ENCODE measurements at regions of chr1 and their contacts with region 1.

Region 1: DNA sequence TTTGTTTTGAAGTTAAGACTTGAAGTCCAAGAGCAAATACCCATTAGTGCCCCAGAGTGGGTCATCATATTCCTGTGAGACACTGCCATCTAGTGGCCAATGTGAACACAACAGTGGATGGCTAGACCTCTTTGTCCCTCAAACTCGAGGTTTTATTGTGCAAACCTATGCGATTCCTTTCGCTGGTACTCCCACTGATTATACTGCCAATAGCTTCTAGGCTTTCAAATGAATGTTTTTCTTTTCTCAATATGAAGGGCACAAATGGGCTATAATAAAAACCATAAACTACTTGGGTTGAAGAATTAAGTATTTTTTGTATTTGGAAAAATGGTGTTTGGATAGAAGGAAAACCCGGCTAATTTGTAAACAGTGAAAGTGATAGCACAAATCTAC is 100.4 kb upstream of the ZNF281 start:
- DNase-seq: peak; percentile 39
- ATAC-seq: peak; percentile 99
- H3K4me3 ChIP-seq: no peak overlapping the region
- H3K27ac ChIP-seq: no peak overlapping the region
- H3K4me1 ChIP-seq: no peaks in the 10 kb centered on the region
- H3K27me3 ChIP-seq: no peaks in the 10 kb centered on the region; a peak in 2 of 4 replicates
- CTCF ChIP-seq: peak; percentile 75 to 95 (median 83)
- EP300 ChIP-seq: no peak
- POLR2A ChIP-seq: no peak
- RAD21 ChIP-seq: peak; percentile 97

Region 2: GRCh38 chr1:199948587-199949280 is 561.5 kb before region 1 on chr1:
- CTCF ChIA-PET with region 1: no interaction called
- POLR2A ChIA-PET with region 1: no interaction called
- RAD21 ChIA-PET with region 1: no interaction called
- SMC1A ChIA-PET with region 1: no interaction called
- in situ Hi-C with region 1: no loop called
- intact Hi-C with region 1: loop called (anchors 10 kb)
- DNase-seq: no peak
- ATAC-seq: no peak
- H3K4me3 ChIP-seq: no peak overlapping the region
- H3K27ac ChIP-seq: no peak overlapping the region
- H3K4me1 ChIP-seq: no peaks in the 10 kb centered on the region
- H3K27me3 ChIP-seq: peaks cover 0 to 5% of the 10 kb centered on the region in 2 experiments; a peak in 2 of 4 replicates
- CTCF ChIP-seq: no peak
- EP300 ChIP-seq: no peak
- POLR2A ChIP-seq: no peak
- RAD21 ChIP-seq: no peak

Region 3: GRCh38 chr1:200279810-200280411 is 230.3 kb before region 1 on chr1:
- CTCF ChIA-PET with region 1: interaction called, 12 read pairs
- POLR2A ChIA-PET with region 1: no interaction called
- RAD21 ChIA-PET with region 1: interaction called, 10 read pairs
- SMC1A ChIA-PET with region 1: interaction called, 15 read pairs
- in situ Hi-C with region 1: no loop called
- intact Hi-C with region 1: no loop called
- DNase-seq: no peak
- ATAC-seq: peak; percentile 58
- H3K4me3 ChIP-seq: no peak overlapping the region
- H3K27ac ChIP-seq: no peak overlapping the region
- H3K4me1 ChIP-seq: 0 out of 2 replicates have a peak, but pooled peaks cover 5% of the 10 kb centered on the region
- H3K27me3 ChIP-seq: no peaks in the 10 kb centered on the region; a peak in 1 of 4 replicates
- CTCF ChIP-seq: peak; percentile 66 to 72 (median 71)
- EP300 ChIP-seq: no peak
- POLR2A ChIP-seq: no peak
- RAD21 ChIP-seq: peak; percentile 83

Region 4: GRCh38 chr1:200496937-200497336 is 13.3 kb before region 1 on chr1:
- CTCF ChIA-PET with region 1: interaction called, 32 read pairs
- POLR2A ChIA-PET with region 1: no interaction called
- RAD21 ChIA-PET with region 1: no interaction called
- SMC1A ChIA-PET with region 1: interaction called, 11 read pairs
- in situ Hi-C with region 1: no loop called
- intact Hi-C with region 1: no loop called
- DNase-seq: no peak
- ATAC-seq: no peak
- H3K4me3 ChIP-seq: no peak overlapping the region
- H3K27ac ChIP-seq: no peak overlapping the region
- H3K4me1 ChIP-seq: no peaks in the 10 kb centered on the region
- H3K27me3 ChIP-seq: peaks cover 0 to 2% of the 10 kb centered on the region in 2 experiments; a peak in 2 of 4 replicates
- CTCF ChIP-seq: no peak
- EP300 ChIP-seq: no peak
- POLR2A ChIP-seq: no peak
- RAD21 ChIP-seq: no peak